PC-3 (cell line): ENCODE measurements at regions of chr3 and their contacts with region 1.

Region 1: DNA sequence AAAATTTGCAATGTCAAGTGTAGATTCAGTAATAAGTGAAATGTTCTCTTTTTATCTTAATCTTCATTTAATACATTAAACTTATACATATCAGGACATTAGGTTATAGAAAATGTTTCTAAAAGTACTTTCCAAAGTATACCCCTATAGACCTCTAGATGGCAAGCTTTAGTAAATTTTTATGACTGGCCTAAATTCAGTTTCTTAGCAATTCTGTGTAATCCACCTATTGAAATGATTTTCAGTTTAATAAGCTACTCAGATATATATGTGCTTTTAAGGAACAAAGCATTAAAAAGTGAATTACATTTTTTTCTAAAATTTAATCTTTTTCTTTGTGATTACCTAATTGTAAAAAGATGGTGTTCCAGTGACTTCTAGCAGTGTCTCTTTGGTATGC is 342.2 kb downstream of the GBE1 start:
- DNase-seq: peak; percentile 54
- ATAC-seq: peak; percentile 63; the same call in 1 of the 2 replicates
- H3K4me3 ChIP-seq: no peak overlapping the region
- H3K27ac ChIP-seq: no peak overlapping the region
- H3K4me1 ChIP-seq: no peaks in the 10 kb centered on the region
- H3K27me3 ChIP-seq: no peaks in the 10 kb centered on the region
- CTCF ChIP-seq: peak; percentile 77

Region 2: DNA sequence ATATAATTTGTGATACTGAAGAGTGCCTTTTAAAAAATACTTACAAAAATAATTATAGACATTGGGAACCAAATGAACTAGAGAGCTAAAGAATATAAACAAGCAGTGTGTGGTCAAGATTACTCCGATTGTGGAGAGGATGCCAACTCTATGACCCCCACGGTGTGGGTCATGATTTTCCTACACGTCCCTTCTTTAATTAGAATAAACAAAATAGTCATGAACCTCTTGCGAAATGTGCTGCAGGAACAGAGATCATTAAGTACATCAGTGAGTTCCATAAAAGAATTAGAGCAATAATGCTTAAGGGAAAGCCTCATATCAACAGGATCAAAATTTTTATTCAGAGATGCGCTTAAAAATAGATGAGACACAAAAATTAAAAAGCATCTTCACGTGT is 1174.8 kb before region 1 on chr3:
- CTCF ChIA-PET with region 1: no interaction called
- POLR2A ChIA-PET with region 1: no interaction called
- intact Hi-C with region 1: no loop called
- DNase-seq: no peak
- ATAC-seq: no peak
- H3K4me3 ChIP-seq: no peak overlapping the region
- H3K27ac ChIP-seq: no peak overlapping the region
- H3K4me1 ChIP-seq: no peaks in the 10 kb centered on the region
- H3K27me3 ChIP-seq: no peaks in the 10 kb centered on the region
- CTCF ChIP-seq: no peak

Region 3: DNA sequence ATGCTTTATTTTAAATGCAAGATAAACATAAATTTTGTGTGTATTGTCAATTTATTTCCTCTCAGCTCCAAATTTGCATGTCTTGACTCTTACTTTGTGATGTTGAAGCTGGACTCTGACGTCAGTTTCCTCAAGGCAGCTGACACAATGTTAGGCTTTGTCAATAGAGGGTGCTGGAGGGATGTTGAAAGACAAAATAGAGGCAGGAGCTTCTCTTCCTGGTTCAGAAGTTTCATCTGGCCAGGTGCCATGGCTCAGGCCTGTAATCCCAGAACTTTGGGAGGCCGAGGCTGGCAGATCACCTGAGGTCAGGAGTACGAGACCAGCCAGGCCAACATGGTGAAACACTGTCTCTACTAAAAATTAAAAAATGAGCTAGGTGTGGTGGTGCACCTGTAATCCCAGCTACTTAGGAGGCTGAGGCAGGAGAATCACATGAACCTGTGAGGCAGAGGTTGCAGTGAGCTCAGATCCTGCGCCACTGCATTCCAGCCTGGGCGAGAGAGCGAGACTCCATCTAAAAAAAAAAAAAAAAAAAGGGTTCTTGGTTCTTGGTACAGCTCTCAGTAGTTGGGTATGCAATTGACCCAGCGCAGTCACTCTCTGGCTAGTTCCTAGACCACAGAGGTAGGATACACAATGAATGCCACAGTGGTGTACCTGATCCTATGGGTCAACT is 66.2 kb before region 1 on chr3:
- CTCF ChIA-PET with region 1: interaction called, 7 read pairs
- POLR2A ChIA-PET with region 1: no interaction called
- intact Hi-C with region 1: loop called (anchors 5 kb)
- DNase-seq: peak; percentile 69
- ATAC-seq: peak; percentile 72
- H3K4me3 ChIP-seq: no peak overlapping the region
- H3K27ac ChIP-seq: no peak overlapping the region
- H3K4me1 ChIP-seq: no peaks in the 10 kb centered on the region
- H3K27me3 ChIP-seq: no peaks in the 10 kb centered on the region
- CTCF ChIP-seq: peak; percentile 58

Region 4: DNA sequence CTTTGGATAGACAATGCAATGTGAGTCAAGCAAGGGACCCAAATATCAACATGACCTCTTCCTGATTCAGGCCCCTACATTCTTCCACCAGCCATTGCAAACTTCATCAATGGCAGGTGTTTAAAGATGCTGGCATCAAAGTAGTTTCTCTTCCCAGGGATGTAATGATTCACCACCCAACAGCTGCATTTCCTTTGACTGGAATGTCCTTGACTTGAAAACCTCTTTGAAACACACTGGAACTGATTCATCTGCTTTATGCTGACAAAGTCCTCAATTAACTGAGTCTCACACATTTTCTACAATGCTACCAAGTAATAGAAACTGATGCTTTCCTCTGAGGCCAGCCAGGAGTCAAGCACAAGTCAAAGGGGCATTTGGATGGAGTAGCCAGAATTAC is 43.3 kb before region 1 on chr3:
- CTCF ChIA-PET with region 1: no interaction called
- POLR2A ChIA-PET with region 1: no interaction called
- intact Hi-C with region 1: no loop called
- DNase-seq: no peak
- ATAC-seq: no peak
- H3K4me3 ChIP-seq: no peak overlapping the region
- H3K27ac ChIP-seq: no peak overlapping the region
- H3K4me1 ChIP-seq: no peaks in the 10 kb centered on the region
- H3K27me3 ChIP-seq: no peaks in the 10 kb centered on the region
- CTCF ChIP-seq: no peak

Region 5: DNA sequence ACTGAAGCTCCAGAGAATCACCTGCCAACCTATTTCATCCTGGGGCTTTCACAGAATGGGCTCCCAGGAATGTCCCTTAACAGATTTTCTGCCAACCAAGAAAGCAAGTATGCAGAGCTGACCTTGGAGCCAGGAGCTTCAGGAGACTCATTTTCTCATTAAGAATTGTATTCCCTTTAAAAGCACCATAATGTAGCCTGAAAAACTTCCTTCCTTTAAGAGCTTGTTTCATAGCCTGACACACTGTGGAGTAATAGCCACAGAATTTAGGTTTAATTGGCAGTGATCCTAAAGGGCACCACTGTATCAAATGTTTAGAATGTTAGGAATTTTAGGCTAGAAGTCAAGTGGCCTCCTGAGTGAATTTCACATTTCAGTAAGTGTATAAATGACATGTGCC is 32.4 kb after region 1 on chr3:
- CTCF ChIA-PET with region 1: no interaction called
- POLR2A ChIA-PET with region 1: no interaction called
- intact Hi-C with region 1: no loop called
- DNase-seq: peak; percentile 94
- ATAC-seq: peak; percentile 91
- H3K4me3 ChIP-seq: no peak overlapping the region
- H3K27ac ChIP-seq: peak overlapping the region; percentile 65
- H3K4me1 ChIP-seq: peaks cover 26% of the 10 kb centered on the region
- H3K27me3 ChIP-seq: no peaks in the 10 kb centered on the region
- CTCF ChIP-seq: no peak

Region 6: DNA sequence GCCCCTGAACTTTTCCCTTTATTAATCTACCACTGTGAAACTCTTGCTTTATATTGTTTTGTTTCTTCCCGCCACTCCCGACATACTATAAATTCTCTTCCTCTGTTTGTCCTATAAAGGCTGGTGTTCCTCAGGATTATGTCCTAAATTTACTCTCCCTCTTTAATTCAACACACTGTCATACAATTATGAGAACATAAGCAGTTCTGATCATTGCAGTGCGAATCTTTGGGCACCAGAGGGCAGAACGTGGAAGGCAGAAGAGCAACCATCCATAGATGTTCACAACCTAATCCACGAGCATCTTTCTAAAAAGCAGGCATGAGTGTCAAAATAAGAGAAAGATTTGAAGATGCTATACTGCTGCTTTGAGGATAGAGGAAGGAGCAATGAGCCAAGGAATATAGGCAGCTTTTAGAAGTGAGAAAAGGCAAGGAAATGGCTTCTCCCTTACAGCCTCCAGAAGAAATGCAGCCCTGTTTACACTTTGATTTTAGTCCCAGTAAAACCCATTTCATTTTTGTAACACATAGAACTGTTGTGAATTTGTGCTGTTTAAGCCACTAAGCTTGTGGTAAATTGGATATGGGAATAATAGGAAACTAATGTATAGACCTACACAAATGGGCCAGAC is 162.9 kb after region 1 on chr3:
- CTCF ChIA-PET with region 1: no interaction called
- POLR2A ChIA-PET with region 1: no interaction called
- intact Hi-C with region 1: loop called (anchors 1 kb)
- DNase-seq: peak; percentile 78
- ATAC-seq: peak; percentile 94
- H3K4me3 ChIP-seq: no peak overlapping the region
- H3K27ac ChIP-seq: no peak overlapping the region
- H3K4me1 ChIP-seq: no peaks in the 10 kb centered on the region
- H3K27me3 ChIP-seq: no peaks in the 10 kb centered on the region
- CTCF ChIP-seq: peak; percentile 92

Region 7: GRCh38 chr3:81643721-81644120 is 224.5 kb after region 1 on chr3:
- CTCF ChIA-PET with region 1: interaction called, 4 read pairs
- POLR2A ChIA-PET with region 1: no interaction called
- intact Hi-C with region 1: loop called (anchors 1 kb)
- DNase-seq: peak; percentile 58
- ATAC-seq: peak; percentile 85
- H3K4me3 ChIP-seq: no peak overlapping the region
- H3K27ac ChIP-seq: no peak overlapping the region
- H3K4me1 ChIP-seq: peaks cover 9% of the 10 kb centered on the region; the same call in 1 of the 2 replicates
- H3K27me3 ChIP-seq: no peaks in the 10 kb centered on the region
- CTCF ChIP-seq: peak; percentile 74